Activated CD8-positive, alpha-beta T cell treated with anti-CD3 and anti-CD28 coated beads for 36 hours (primary cell): ENCODE measurements at regions of chr17 and their contacts with region 1.

Region 1: DNA sequence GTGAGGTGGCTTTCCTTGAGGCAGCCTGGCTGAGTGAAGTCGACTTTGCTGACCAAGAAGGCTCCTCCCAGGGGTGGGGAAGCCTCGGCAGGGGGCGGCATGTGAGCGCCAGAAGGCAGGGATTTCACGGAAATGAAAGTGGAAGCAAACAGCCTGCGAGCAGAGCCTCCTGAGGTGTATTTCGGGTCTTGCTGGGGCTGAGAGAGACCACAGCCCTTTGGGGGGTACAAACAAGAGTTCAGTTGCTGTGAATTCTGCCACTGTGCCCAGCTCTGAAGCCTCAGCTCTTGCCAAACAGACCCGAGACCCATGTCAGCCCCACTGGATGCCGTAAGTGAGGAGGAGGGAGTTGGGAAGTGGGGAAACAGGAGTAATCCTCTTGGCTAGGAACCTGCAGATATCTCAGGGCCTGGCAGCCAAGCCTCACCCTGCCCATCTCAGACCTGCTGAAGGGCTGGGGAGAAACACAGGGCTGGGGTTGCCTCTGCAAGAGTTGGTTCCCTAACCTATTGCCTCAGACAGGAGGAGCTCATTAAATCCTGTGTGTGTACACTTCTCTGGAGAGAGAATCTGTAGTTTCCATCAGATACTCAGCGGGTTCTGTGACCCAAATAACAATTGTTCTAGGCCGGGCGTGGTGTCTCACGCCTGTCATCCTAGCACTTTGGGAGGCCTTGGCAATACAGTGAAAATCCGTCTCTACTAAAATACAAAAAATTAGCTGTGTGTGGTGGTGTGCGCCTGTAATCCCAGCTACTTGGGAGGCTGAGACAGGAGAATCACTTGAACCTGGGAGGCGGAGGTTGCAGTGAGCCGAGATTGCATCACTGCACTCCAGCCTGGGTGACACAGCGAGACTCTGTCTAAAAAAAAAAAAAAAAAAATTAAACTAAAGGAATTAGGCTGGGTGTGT is at the start of gene IFI35:
- DNase-seq: peak; percentile 93
- ATAC-seq: peak; percentile 98
- H3K4me3 Mint-ChIP-seq: peak within 1 kb of the TSS; percentile 95
- H3K27ac Mint-ChIP-seq: peak within 1 kb of the TSS; percentile 99
- H3K4me1 Mint-ChIP-seq: peaks cover 20% of the 10 kb centered on the region
- H3K27me3 Mint-ChIP-seq: no peaks in the 10 kb centered on the region
- CTCF ChIP-seq: no peak
- total RNA-seq, gene IFI35: 33.4 to 35.8 TPM

Region 2: DNA sequence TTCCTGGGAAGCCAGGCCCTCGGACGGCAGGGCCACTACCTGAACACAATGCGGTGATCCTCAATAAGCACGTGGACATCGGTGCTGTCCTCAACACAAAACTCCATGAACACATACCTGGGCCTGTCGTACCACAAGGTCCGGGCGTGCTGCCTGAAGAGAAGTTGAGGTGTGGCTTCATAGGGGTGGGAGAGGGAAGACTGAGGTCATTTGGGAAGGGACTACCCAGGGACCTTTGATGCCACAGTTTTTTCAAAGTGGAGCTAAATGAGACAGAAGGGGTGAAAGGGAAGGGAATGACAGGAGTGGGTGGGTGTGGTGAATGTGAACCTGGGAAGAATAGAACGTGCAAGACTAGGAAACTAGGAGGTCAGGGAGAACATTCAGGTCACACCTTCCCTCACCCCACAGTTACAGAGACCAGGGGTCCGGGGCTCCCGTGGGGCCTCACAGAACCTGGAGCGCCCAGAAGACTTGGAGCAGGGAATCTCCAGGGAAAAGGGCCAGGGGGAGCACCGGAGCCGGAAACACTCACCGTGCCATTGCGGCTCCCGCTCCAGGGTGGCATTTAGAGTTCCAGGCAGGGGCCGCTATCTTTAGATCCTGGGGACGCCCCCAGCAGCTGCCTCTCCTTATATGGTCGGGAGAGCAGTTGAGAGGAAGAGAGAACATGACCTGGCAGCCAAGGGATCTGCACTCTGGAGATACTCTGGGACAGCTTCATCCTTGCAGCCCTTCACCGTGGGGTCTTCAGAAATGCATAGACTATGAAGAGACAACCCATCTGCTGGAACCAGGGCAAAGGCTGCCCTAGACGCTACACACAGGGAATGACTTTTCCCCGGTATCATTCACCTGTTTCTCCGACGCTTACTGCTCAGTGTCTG is 27.1 kb before region 1 on chr17 and contains the start of gene PTGES3L:
- CTCF ChIA-PET with region 1: no interaction called
- POLR2A ChIA-PET with region 1: no interaction called
- intact Hi-C with region 1: no loop called
- DNase-seq: peak; percentile 66
- ATAC-seq: peak; percentile 62
- H3K4me3 Mint-ChIP-seq: peak within 1 kb of the TSS; percentile 96
- H3K27ac Mint-ChIP-seq: peak within 1 kb of the TSS; percentile 99
- H3K4me1 Mint-ChIP-seq: peaks cover 30% of the 10 kb centered on the region
- H3K27me3 Mint-ChIP-seq: no peaks in the 10 kb centered on the region
- CTCF ChIP-seq: no peak
- total RNA-seq, gene PTGES3L: 2.2 to 2.8 TPM

Region 3: GRCh38 chr17:43018008-43018853 is 11.3 kb after region 1 on chr17:
- CTCF ChIA-PET with region 1: interaction called, 3 read pairs
- POLR2A ChIA-PET with region 1: interaction called, 14 read pairs
- intact Hi-C with region 1: no loop called
- DNase-seq: no peak
- ATAC-seq: peak; percentile 15
- H3K4me3 Mint-ChIP-seq: no peak overlapping the region
- H3K27ac Mint-ChIP-seq: no peak overlapping the region
- H3K4me1 Mint-ChIP-seq: peaks cover 31% of the 10 kb centered on the region
- H3K27me3 Mint-ChIP-seq: no peaks in the 10 kb centered on the region
- CTCF ChIP-seq: no peak

Region 4: DNA sequence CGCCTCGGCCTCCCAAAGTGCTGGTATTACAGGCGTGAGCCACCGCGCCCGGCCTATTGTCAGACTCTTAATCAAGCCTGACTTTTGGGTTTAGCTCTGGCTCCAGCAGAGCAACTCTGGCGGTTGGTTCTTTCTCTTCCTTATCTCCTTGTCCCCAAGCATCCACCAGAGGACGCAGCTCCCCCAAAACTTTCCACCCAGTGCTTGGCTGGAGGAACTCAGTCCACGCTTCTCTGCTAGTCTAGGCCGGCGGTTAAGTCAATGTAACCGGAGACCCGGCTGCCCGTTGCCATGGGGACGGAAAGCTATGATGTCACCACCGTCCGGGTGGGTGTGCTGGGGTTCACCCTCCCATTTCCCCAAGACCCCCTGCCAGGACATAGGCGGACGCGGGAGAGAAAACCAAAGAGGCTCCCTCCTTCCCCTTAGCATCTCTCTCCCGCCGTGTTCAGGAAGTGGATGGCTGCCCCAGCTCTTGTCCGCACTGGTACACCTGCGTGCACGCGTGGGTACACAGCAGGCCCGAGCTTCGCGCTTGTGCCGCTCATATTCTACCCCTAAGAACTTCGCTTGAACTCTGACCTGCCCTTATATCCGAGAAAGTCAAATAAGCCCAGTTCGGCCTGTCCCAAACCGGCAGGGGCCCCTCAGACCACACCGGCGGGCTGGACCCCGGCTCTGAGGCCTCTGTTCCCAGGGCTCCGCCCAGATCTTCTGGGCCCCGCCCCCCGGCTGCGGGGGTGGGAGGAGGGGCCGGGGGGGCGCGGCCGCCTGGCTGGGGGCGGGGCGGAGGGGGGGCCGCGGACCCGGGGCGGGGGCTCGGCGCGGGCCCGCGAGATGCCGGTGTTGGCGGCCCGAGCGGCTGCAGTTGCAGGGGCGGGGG is 17.8 kb after region 1 on chr17 and contains the start of gene RND2:
- CTCF ChIA-PET with region 1: interaction called, 6 read pairs
- POLR2A ChIA-PET with region 1: interaction called, 13 read pairs
- intact Hi-C with region 1: no loop called
- DNase-seq: peak; percentile 92
- ATAC-seq: peak; percentile 69
- H3K4me3 Mint-ChIP-seq: peak within 1 kb of the TSS; percentile 75
- H3K27ac Mint-ChIP-seq: peak within 1 kb of the TSS; percentile 53
- H3K4me1 Mint-ChIP-seq: peaks cover 25% of the 10 kb centered on the region
- H3K27me3 Mint-ChIP-seq: no peaks in the 10 kb centered on the region
- CTCF ChIP-seq: no peak
- total RNA-seq, gene RND2: not detected